Right ventricle myocardium inferior (tissue), 1 donor: ENCODE measurements at regions of chr5 and their contacts with region 1.

Region 1: GRCh38 chr5:56909294-56910209 is at the start of gene SETD9:
- DNase-seq: peak; percentile 100
- ATAC-seq: peak; percentile 96
- total RNA-seq, gene SETD9: 15.9 TPM

Region 2: DNA sequence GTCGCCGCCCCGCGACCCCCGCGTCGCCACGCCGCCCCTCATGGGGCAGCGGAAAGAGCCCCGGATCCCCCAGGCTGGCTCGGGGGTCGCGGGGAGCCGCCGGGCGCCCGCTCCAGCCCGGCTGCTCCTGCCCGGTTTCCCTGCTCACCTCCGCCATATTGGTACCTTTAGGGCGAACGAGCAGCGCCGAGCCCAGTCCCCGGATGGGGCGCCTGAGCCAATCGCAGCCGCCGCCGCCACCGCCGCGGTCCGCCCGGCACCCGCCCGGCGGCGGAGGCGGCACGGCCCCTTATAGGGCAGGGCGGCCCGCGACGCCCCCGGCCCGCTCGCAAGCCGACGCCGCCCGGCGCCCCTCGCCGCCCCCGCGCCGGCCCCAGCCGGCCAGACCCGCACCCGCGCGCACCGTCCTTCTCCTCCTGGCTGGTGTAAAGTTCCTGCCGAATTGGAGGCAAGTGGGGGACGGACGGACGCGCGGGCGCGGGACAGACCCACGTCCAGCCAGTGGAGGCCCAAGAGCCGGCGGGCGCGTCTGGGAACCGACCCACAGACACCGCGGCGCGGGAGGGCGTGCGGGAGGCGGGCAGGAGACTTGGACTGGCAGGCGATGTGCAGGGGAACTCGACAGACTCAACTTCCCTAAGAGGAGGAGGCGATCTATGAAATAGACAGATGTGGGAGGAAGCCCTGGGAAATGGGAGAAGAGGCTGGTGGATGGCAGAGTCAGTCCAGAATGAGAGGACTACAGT is 42.6 kb after region 1 on chr5 and contains the start of gene MIER3:
- intact Hi-C with region 1: loop called (anchors 5 kb)
- DNase-seq: peak; percentile 90
- ATAC-seq: peak; percentile 96
- total RNA-seq, gene MIER3: 12.0 TPM

Region 3: GRCh38 chr5:57173185-57174127 is 263.9 kb after region 1 on chr5 and contains the start of gene GPBP1:
- intact Hi-C with region 1: loop called (anchors 2 kb)
- DNase-seq: peak; percentile 99
- ATAC-seq: peak; percentile 94
- total RNA-seq, gene GPBP1: 58.9 TPM